Gastrocnemius medialis (tissue), 4 donors: ENCODE measurements at regions of chr9 and their contacts with region 1.

Region 1: GRCh38 chr9:94805585-94805984 is 79.1 kb downstream of the AOPEP start:
- DNase-seq: no peak
- ATAC-seq: peak; percentile 12 to 41
- H3K4me3 ChIP-seq: no peak overlapping the region
- H3K27ac ChIP-seq: peak overlapping the region; percentile 2 to 39 (median 32)
- H3K4me1 ChIP-seq: peaks cover 66 to 72% of the 10 kb centered on the region in 2 donors
- H3K27me3 ChIP-seq: no peaks in the 10 kb centered on the region
- CTCF ChIP-seq: no peak
- POLR2A ChIP-seq: no peak

Region 2: DNA sequence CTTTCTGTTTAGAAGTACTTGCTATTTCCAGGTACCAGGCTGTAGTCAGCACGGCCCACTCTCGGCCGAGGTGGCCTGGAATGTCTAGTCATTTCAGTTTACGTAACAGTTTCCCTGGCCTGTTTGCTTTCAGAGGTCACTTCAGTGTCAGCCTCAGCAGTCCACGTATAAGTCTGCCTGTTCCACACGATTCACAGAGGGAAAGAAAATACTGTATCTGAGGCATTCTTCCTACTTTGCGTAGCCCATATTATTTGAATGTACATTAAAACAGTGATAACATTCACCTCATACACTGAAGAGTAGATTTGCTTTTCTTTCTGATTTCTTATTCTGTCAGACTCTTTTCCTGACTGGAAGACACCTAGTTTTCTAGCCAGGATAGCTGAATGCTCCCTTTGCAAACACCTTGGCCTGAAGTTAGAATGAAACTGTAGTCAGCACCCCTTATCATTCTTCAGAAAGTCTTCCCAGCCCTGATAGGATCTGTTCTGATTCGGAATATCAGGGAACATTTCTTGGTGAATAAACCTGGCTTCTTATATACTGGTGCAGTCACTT is 61.8 kb after region 1 on chr9:
- in situ Hi-C with region 1: no loop called
- intact Hi-C with region 1: loop called (anchors 2 kb)
- DNase-seq: peak; percentile 61 to 85
- ATAC-seq: peak; percentile 80 to 86
- H3K4me3 ChIP-seq: peak overlapping the region in 3 of 4 donors; percentile 16 to 30 (median 20)
- H3K27ac ChIP-seq: peak overlapping the region; percentile 89 to 96 (median 94)
- H3K4me1 ChIP-seq: peaks cover 73 to 76% of the 10 kb centered on the region in 2 donors
- H3K27me3 ChIP-seq: no peaks in the 10 kb centered on the region
- CTCF ChIP-seq: no peak
- POLR2A ChIP-seq: no peak

Region 3: GRCh38 chr9:94922098-94922607 is 116.6 kb after region 1 on chr9:
- in situ Hi-C with region 1: no loop called
- intact Hi-C with region 1: loop called (anchors 5 kb)
- DNase-seq: peak in 1 of 2 donors; percentile 41
- ATAC-seq: peak; percentile 24 to 49
- H3K4me3 ChIP-seq: no peak overlapping the region
- H3K27ac ChIP-seq: peak overlapping the region; percentile 38 to 65 (median 45)
- H3K4me1 ChIP-seq: peaks cover 22 to 32% of the 10 kb centered on the region in 2 donors
- H3K27me3 ChIP-seq: no peaks in the 10 kb centered on the region
- CTCF ChIP-seq: no peak
- POLR2A ChIP-seq: no peak